Right cardiac atrium (tissue), 5 donors: ENCODE measurements at regions of chr2 and their contacts with region 1.

Region 1: GRCh38 chr2:205766779-205767359 is 84.6 kb downstream of the NRP2 start:
- DNase-seq: peak; percentile 61 to 85 (median 77)
- ATAC-seq: no peak
- H3K4me3 ChIP-seq: no peak overlapping the region
- H3K27ac ChIP-seq: no peak overlapping the region
- H3K4me1 ChIP-seq: peaks cover 2% of the 10 kb centered on the region
- H3K27me3 ChIP-seq: no peaks in the 10 kb centered on the region

Region 2: GRCh38 chr2:205885492-205886099 is 118.7 kb after region 1 on chr2:
- intact Hi-C with region 1: loop called in 3 of 4 experiments (anchors 5 to 10 kb)
- DNase-seq: peak; percentile 89 to 95 (median 94)
- ATAC-seq: peak; percentile 88 to 89
- H3K4me3 ChIP-seq: no peak overlapping the region
- H3K27ac ChIP-seq: no peak overlapping the region
- H3K4me1 ChIP-seq: peaks cover 2% of the 10 kb centered on the region
- H3K27me3 ChIP-seq: no peaks in the 10 kb centered on the region

Region 3: DNA sequence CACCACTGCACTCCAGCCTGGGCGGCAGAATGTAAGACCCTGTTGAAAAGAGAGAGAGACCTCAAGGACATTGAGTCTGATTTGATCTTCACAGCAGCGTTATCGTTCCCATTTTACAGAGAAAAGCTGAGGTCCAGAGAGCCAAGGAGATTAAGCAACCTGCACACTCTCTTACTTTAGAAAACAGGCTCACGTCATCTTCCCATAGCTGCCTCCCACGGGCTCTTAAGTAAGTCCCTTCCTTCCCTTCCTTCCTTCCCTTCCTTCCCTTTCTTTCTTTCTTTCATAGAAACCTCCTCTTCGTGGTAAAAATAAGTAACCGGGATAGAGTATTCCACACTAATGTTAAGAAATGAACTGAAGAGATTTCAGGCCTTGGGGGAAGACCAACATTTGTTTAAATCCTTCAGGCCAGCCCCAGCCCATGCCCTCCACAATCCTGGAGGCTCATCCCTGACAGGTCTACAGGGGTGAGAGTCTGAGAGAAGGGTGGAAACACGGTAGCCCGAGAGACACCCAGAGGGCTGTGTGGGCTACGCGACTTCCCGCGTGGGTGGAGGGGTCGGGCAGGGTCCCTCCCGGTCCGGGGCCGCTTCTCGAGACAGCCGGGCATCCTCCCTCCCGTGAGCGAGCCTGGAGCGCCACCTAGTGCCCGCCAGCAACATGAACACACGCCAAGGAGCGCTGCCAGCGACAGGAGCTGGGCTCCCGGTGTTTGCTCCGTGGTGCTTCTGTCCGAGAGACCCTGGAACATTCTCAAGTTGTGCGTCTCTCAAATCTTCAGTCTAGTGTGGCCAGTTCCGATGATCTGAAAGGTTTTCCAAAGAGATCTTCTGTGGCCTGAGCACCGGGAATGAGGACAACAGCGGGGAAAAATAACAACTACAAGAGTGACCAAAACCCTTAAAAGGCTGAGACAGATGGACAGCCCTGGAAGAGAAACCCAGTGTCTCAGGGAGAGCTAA is 158.8 kb after region 1 on chr2:
- intact Hi-C with region 1: loop called in 3 of 4 experiments (anchors 5 to 10 kb)
- DNase-seq: peak; percentile 80 to 92 (median 91)
- ATAC-seq: peak; percentile 89 to 92
- H3K4me3 ChIP-seq: peak overlapping the region; percentile 15
- H3K27ac ChIP-seq: no peak overlapping the region
- H3K4me1 ChIP-seq: no peaks in the 10 kb centered on the region
- H3K27me3 ChIP-seq: no peaks in the 10 kb centered on the region